ENCODE measurements at regions of chr5 and their contacts with region 1.

Region 1: GRCh38 chr5:172454358-172455086 is at the start of gene SH3PXD2B:
- DNase-seq: no peak
- ATAC-seq: peak; percentile 31 to 51
- H3K4me3 ChIP-seq: peak within 1 kb of the TSS; percentile 64 to 77 (median 71)
- H3K27ac ChIP-seq: peak within 1 kb of the TSS; percentile 60 to 74 (median 65)
- H3K4me1 ChIP-seq: peaks cover 0 to 5% of the 10 kb centered on the region in 2 donors
- H3K27me3 ChIP-seq: no peaks in the 10 kb centered on the region
- CTCF ChIP-seq: no peak
- POLR2A ChIP-seq: peak; percentile 50 to 72
- total RNA-seq, gene SH3PXD2B: 2.7 to 10.2 (median 4.2) TPM

Region 2: DNA sequence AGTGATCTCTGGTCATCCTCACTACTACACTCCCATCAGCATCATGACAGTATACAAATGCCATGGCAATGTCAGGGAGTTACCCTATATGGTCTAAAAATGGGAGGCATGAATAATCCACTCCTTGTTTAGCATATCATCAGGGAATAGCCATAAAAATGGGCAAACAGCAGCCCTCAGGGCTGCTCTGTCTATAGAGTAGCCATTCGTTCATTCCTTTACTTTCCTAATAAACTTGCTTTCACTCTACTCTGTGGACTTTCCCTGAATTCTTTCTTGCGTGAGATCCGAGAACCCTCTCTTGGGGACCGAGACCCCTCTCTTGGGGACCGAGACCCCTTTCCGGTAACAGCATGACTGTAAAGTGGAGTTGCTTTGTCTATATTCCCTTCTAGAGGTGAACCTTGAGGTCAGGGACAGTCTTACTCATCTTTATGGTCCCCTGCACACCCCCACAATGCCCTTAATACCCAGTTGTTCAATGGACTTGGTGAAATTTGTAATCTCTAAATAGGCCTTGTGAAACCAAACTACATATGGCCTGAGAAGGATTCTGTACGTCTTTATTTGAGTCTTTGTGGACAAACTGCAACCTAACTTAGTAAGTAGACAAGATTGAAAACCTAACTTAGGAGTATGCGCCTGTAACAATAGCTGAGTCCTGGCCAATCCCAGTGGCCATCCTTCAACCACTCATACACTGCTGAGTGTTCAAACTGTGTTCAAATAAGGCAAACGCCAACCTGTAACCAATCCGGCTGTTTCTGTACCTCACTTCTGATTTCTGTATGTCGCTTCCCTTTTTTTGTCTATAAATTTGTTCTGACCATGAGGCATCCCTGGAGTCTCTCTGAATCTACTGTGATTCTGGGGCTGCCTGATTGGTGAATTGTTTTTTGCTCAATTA is 138.7 kb before region 1 on chr5:
- in situ Hi-C with region 1: no loop called
- intact Hi-C with region 1: loop called (anchors 10 kb)
- DNase-seq: no peak
- ATAC-seq: no peak
- H3K4me3 ChIP-seq: no peak overlapping the region
- H3K27ac ChIP-seq: no peak overlapping the region
- H3K4me1 ChIP-seq: no peaks in the 10 kb centered on the region
- H3K27me3 ChIP-seq: no peaks in the 10 kb centered on the region
- CTCF ChIP-seq: no peak
- POLR2A ChIP-seq: no peak

Region 3: GRCh38 chr5:172403189-172403796 is 51.2 kb before region 1 on chr5:
- in situ Hi-C with region 1: no loop called
- intact Hi-C with region 1: loop called (anchors 5 kb)
- DNase-seq: peak; percentile 45 to 62
- ATAC-seq: peak; percentile 57 to 66
- H3K4me3 ChIP-seq: no peak overlapping the region
- H3K27ac ChIP-seq: peak overlapping the region; percentile 44 to 72 (median 60)
- H3K4me1 ChIP-seq: peaks cover 10 to 13% of the 10 kb centered on the region in 2 donors
- H3K27me3 ChIP-seq: no peaks in the 10 kb centered on the region
- CTCF ChIP-seq: no peak
- POLR2A ChIP-seq: no peak

Region 4: DNA sequence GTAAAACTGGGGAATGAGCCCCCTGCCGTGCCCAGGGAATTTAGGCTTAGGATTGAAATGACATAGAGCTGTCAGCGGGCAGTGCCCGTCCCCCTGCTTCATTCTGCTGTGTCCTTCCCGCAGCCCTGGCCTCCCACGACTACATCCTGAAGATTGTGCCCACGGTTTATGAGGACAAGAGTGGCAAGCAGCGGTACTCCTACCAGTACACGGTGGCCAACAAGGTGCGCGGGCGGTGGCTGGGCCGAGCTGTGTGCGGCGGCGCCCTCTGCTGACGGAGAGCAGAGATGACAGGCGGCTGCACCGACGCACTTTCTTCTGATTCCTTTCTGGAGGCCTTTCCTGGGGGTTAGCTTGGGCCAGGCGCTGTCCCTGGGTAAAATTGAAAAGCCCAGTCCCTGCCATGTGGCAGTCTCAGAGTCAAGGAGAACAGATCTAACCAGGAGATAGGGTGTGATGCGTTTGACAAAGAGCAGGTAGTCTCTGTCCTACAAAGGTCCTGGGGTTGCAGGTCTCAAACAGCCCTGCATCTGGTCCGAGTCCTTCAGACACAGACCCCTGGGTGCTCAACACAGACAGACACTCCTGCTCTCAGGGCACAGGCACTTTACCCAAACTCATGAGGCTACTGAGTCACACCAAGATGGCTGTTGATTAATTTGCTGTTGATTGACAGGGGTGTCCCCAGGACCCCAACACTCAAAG is 477.9 kb after region 1 on chr5:
- in situ Hi-C with region 1: loop called in 2 of 4 experiments (anchors 25 kb)
- intact Hi-C with region 1: no loop called
- DNase-seq: peak; percentile 60 to 66
- ATAC-seq: peak; percentile 73 to 92
- H3K4me3 ChIP-seq: no peak overlapping the region
- H3K27ac ChIP-seq: peak overlapping the region in 3 of 4 donors; percentile 2 to 67 (median 65)
- H3K4me1 ChIP-seq: peaks cover 10 to 12% of the 10 kb centered on the region in 2 donors
- H3K27me3 ChIP-seq: no peaks in the 10 kb centered on the region
- CTCF ChIP-seq: peak; percentile 94 to 99 (median 98)
- POLR2A ChIP-seq: no peak